H1 (cell line): ENCODE measurements at regions of chr9 and their contacts with region 1.

Region 1: DNA sequence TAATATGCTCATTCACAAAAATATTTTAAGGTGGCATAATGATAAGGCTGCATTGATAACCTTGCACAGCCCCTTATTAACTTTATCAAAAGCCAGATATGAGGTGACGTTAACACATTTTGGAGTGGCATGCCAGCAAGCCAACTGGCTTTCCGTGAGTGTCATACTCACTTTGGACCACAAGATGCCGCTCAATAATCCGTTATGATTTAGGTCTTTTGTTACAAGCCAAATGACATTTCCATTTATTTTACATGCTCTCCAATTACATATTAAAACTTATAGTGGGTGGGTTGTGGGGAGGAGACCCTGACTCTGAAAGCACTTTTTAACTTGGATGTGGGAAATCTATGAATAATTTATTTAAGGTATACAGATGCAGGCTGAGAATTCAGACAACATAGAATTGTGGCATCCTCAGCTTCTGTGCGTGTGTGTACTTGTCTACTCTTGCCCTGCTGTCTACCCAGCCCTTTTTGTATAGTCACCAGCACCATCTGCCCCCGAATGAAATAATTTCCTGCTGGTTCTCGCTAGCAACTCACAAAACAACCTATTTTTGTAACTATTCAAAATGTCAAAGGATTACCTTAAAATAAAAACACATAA is 305.1 kb downstream of the PSAT1 start:
- DNase-seq: peak in 1 of 2 experiments; percentile 55
- H3K4me3 ChIP-seq: no peak overlapping the region
- H3K27ac ChIP-seq: no peak overlapping the region
- H3K4me1 ChIP-seq: peaks cover 0 to 4% (median 1%) of the 10 kb centered on the region in 4 experiments; a peak in 3 of 7 replicates
- H3K27me3 ChIP-seq: no peaks in the 10 kb centered on the region
- CTCF ChIP-seq: peak; percentile 50 to 80 (median 68)
- EP300 ChIP-seq: no peak
- POLR2A ChIP-seq: no peak
- RAD21 ChIP-seq: peak; percentile 86

Region 2: DNA sequence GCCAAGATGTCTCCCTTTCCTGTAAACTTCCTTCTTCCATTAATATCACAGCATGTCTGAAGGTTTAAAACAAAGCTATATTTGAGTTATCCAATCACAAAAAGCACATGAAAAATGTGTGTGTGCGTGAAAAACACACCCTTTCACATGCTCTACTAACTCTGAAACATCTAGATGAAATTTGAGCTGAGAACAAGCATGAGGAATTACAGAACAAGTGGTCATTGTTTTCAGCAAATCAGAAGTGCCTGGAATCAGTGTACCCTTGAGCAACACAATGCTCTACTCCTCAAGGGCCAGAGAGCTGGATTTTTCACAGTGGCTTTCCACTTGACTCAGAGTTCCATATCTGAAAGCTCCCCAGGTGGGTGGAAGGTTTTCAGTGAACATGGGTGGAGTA is 49.3 kb before region 1 on chr9:
- CTCF ChIA-PET with region 1: no interaction called
- POLR2A ChIA-PET with region 1: no interaction called
- DNase-seq: no peak
- H3K4me3 ChIP-seq: no peak overlapping the region
- H3K27ac ChIP-seq: no peak overlapping the region
- H3K4me1 ChIP-seq: peaks cover 0 to 4% (median 0%) of the 10 kb centered on the region in 4 experiments; a peak in 1 of 7 replicates
- H3K27me3 ChIP-seq: no peaks in the 10 kb centered on the region
- CTCF ChIP-seq: no peak
- EP300 ChIP-seq: no peak
- POLR2A ChIP-seq: no peak
- RAD21 ChIP-seq: no peak

Region 3: GRCh38 chr9:78614892-78615291 is 12.8 kb after region 1 on chr9:
- CTCF ChIA-PET with region 1: interaction called, 31 read pairs
- POLR2A ChIA-PET with region 1: no interaction called
- DNase-seq: no peak
- H3K4me3 ChIP-seq: no peak overlapping the region
- H3K27ac ChIP-seq: no peak overlapping the region
- H3K4me1 ChIP-seq: peaks cover 0 to 2% (median 0%) of the 10 kb centered on the region in 4 experiments; a peak in 1 of 7 replicates
- H3K27me3 ChIP-seq: no peaks in the 10 kb centered on the region
- CTCF ChIP-seq: no peak
- EP300 ChIP-seq: no peak
- POLR2A ChIP-seq: no peak
- RAD21 ChIP-seq: no peak

Region 4: GRCh38 chr9:78626971-78627370 is 24.9 kb after region 1 on chr9:
- CTCF ChIA-PET with region 1: interaction called, 14 read pairs
- POLR2A ChIA-PET with region 1: no interaction called
- DNase-seq: no peak
- H3K4me3 ChIP-seq: no peak overlapping the region
- H3K27ac ChIP-seq: no peak overlapping the region
- H3K4me1 ChIP-seq: no peaks in the 10 kb centered on the region
- H3K27me3 ChIP-seq: no peaks in the 10 kb centered on the region
- CTCF ChIP-seq: no peak
- EP300 ChIP-seq: no peak
- POLR2A ChIP-seq: no peak
- RAD21 ChIP-seq: no peak